OCI-LY7 (cell line): ENCODE measurements at regions of chr10 and their contacts with region 1.

Region 1: GRCh38 chr10:114519284-114519624 is 115.0 kb upstream of the AFAP1L2 start:
- DNase-seq: no peak
- H3K4me3 ChIP-seq: no peak overlapping the region
- H3K27ac ChIP-seq: no peak overlapping the region
- H3K4me1 ChIP-seq: peaks cover 96% of the 10 kb centered on the region
- CTCF ChIP-seq: no peak

Region 2: GRCh38 chr10:114532226-114532625 is 13.0 kb after region 1 on chr10:
- CTCF ChIA-PET with region 1: no interaction called
- POLR2A ChIA-PET with region 1: interaction called, 192 read pairs
- intact Hi-C with region 1: no loop called
- DNase-seq: no peak
- H3K4me3 ChIP-seq: no peak overlapping the region
- H3K27ac ChIP-seq: no peak overlapping the region
- H3K4me1 ChIP-seq: peaks cover 5% of the 10 kb centered on the region
- CTCF ChIP-seq: no peak

Region 3: DNA sequence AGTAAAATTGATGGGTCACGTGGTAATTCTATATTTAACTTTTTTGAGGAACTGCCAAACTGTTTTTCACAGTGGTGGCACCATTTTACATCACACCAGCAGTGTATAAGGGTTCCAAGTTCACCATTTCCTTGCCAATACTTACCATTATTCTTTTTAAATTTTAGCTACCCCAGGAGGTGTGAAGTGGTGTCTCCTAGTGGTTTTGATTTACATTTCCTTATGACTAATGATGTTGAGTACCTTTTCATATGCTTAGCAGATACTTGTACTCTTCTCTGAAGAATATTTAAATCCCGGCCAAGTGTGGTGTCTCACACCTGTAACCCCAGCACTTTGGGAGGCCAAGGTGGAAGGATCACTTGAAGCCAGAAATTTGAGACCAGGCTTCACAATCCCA is 330.9 kb after region 1 on chr10:
- CTCF ChIA-PET with region 1: no interaction called
- POLR2A ChIA-PET with region 1: no interaction called
- intact Hi-C with region 1: no loop called
- DNase-seq: no peak
- H3K4me3 ChIP-seq: no peak overlapping the region
- H3K27ac ChIP-seq: no peak overlapping the region
- H3K4me1 ChIP-seq: no peaks in the 10 kb centered on the region
- CTCF ChIP-seq: no peak